Ovary (tissue), 10 donors: ENCODE measurements at regions of chr19 and their contacts with region 1.

Region 1: GRCh38 chr19:56858026-56858425 is 17.5 kb upstream of the PEG3 start:
- DNase-seq: no peak
- H3K4me3 ChIP-seq: no peak overlapping the region
- H3K27ac ChIP-seq: no peak overlapping the region
- H3K4me1 ChIP-seq: peaks cover 3% of the 10 kb centered on the region
- H3K27me3 ChIP-seq: no peaks in the 10 kb centered on the region
- CTCF ChIP-seq: no peak
- EP300 ChIP-seq: no peak
- POLR2A ChIP-seq: no peak

Region 2: GRCh38 chr19:56692206-56692895 is 165.7 kb before region 1 on chr19:
- intact Hi-C with region 1: no loop called
- DNase-seq: peak; percentile 51 to 71 (median 56)
- H3K4me3 ChIP-seq: no peak overlapping the region
- H3K27ac ChIP-seq: no peak overlapping the region
- H3K4me1 ChIP-seq: no peaks in the 10 kb centered on the region
- H3K27me3 ChIP-seq: no peaks in the 10 kb centered on the region
- CTCF ChIP-seq: no peak
- EP300 ChIP-seq: no peak
- POLR2A ChIP-seq: no peak

Region 3: GRCh38 chr19:56917998-56918397 is 60.0 kb after region 1 on chr19:
- intact Hi-C with region 1: loop called in 1 of 4 experiments (anchors 10 kb)
- DNase-seq: no peak
- H3K4me3 ChIP-seq: no peak overlapping the region
- H3K27ac ChIP-seq: peak overlapping the region in 1 of 2 donors; percentile 74
- H3K4me1 ChIP-seq: peaks cover 9% of the 10 kb centered on the region
- H3K27me3 ChIP-seq: no peaks in the 10 kb centered on the region
- CTCF ChIP-seq: peak in 1 of 3 donors; percentile 32
- EP300 ChIP-seq: no peak
- POLR2A ChIP-seq: no peak